ENCODE measurements at regions of chr1 and their contacts with region 1.

Region 1: DNA sequence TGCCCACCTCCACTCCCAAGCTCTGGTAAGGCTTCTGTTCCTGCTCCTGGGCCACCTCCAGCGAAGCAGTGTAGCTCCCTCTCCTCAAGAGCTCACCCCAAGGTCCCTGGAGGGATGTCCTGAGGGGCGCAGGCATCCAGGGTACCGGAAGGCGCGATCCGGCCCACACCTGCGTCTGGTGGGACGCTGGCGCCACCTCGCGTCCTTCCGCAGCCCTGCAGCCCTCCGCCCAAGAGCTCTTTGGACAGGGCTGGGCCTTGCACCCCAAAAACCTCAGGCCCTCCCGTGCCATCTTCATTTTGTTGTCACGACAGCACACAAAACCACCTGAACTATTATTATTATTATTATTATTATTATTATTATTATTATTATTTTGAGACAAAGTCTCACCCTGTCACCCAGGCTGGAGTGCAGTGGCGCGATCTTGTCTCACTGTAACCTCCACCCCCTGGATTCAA is 49.2 kb upstream of the PAX7 start:
- DNase-seq: no peak
- ATAC-seq: peak; percentile 94
- H3K4me3 ChIP-seq: no peak overlapping the region
- H3K27ac ChIP-seq: no peak overlapping the region
- H3K4me1 ChIP-seq: peaks cover 0 to 6% of the 10 kb centered on the region in 2 experiments; a peak in 3 of 4 replicates
- H3K27me3 ChIP-seq: no peaks in the 10 kb centered on the region
- CTCF ChIP-seq: peak; percentile 52 to 93 (median 82); a peak in 5 of 6 replicates
- POLR2A ChIP-seq: no peak
- RAD21 ChIP-seq: peak; percentile 85

Region 2: DNA sequence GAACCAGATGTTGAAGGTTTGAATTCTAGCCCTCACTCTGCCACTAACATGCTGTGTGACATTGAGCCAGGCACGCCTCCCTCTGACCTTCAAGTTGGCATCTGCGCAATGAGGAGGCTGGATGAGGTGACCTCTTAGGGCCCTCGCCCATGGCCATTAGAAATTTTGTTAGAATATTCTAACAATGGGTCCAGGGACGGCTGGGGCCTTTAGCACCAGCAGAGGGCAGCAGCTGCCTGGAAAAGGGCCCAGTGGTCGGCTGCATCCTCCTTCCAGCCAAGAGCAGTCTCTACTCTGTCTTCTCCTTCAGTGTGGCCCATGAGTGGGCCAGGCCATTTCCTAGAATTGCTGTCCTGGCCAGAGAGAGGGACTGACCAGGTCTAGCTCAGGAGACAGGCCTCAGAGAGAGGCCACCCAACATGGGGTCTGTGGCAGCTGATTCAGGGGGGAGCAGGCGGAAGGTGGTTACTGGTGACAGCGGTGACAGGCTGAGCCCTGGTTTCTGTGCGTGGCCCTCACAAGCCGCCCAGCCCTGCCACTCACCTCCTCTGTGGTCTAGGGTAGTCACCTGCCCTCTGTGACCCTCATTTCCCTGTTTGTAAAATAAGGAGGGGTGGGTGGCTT is 927.6 kb before region 1 on chr1:
- CTCF ChIA-PET with region 1: interaction called, 6 read pairs
- POLR2A ChIA-PET with region 1: no interaction called
- RAD21 ChIA-PET with region 1: no interaction called
- intact Hi-C with region 1: loop called (anchors 2 kb)
- DNase-seq: no peak
- ATAC-seq: peak; percentile 94
- H3K4me3 ChIP-seq: no peak overlapping the region
- H3K27ac ChIP-seq: no peak overlapping the region
- H3K4me1 ChIP-seq: no peaks in the 10 kb centered on the region
- H3K27me3 ChIP-seq: no peaks in the 10 kb centered on the region
- CTCF ChIP-seq: peak; percentile 53 to 81 (median 76); a peak in 5 of 6 replicates
- POLR2A ChIP-seq: no peak
- RAD21 ChIP-seq: peak; percentile 67

Region 3: GRCh38 chr1:18299441-18300338 is 281.8 kb before region 1 on chr1:
- CTCF ChIA-PET with region 1: interaction called, 10 read pairs
- POLR2A ChIA-PET with region 1: no interaction called
- RAD21 ChIA-PET with region 1: no interaction called
- intact Hi-C with region 1: no loop called
- DNase-seq: peak; percentile 10
- ATAC-seq: peak; percentile 77
- H3K4me3 ChIP-seq: no peak overlapping the region
- H3K27ac ChIP-seq: no peak overlapping the region
- H3K4me1 ChIP-seq: no peaks in the 10 kb centered on the region
- H3K27me3 ChIP-seq: peaks cover 49% of the 10 kb centered on the region
- CTCF ChIP-seq: peak; percentile 60 to 91 (median 83)
- POLR2A ChIP-seq: no peak
- RAD21 ChIP-seq: peak; percentile 49

Region 4: GRCh38 chr1:18564676-18565075 is 16.8 kb before region 1 on chr1:
- CTCF ChIA-PET with region 1: interaction called, 30 read pairs
- POLR2A ChIA-PET with region 1: no interaction called
- RAD21 ChIA-PET with region 1: no interaction called
- intact Hi-C with region 1: no loop called
- DNase-seq: no peak
- ATAC-seq: no peak
- H3K4me3 ChIP-seq: no peak overlapping the region
- H3K27ac ChIP-seq: no peak overlapping the region
- H3K4me1 ChIP-seq: no peaks in the 10 kb centered on the region
- H3K27me3 ChIP-seq: 0 out of 2 replicates have a peak, but pooled peaks cover 3% of the 10 kb centered on the region
- CTCF ChIP-seq: no peak
- POLR2A ChIP-seq: no peak
- RAD21 ChIP-seq: no peak

Region 5: DNA sequence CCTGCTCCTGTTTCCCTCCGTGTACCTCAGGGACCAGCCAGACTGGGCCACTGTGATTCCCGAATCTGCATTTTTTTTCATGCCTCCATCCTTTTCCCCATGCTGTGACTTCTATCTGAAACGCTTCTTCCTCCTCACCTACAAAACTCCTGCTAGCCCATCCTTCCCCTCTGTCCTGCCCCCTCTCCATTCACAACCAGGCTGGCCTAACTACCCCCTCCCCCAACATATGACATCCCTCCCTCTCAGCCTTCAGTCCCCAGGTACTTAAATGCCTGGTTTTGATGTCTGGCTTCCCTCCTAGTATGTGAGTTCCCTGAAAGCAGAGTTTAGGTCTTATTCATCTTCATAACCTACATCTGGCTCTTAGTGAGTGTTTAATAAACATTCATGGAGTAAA is 195.3 kb after region 1 on chr1:
- CTCF ChIA-PET with region 1: no interaction called
- POLR2A ChIA-PET with region 1: no interaction called
- RAD21 ChIA-PET with region 1: no interaction called
- intact Hi-C with region 1: no loop called
- DNase-seq: no peak
- ATAC-seq: no peak
- H3K4me3 ChIP-seq: no peak overlapping the region
- H3K27ac ChIP-seq: no peak overlapping the region
- H3K4me1 ChIP-seq: no peaks in the 10 kb centered on the region
- H3K27me3 ChIP-seq: peaks cover 37% of the 10 kb centered on the region
- CTCF ChIP-seq: no peak
- POLR2A ChIP-seq: no peak
- RAD21 ChIP-seq: no peak

Region 6: GRCh38 chr1:18875107-18875795 is 293.8 kb after region 1 on chr1:
- CTCF ChIA-PET with region 1: interaction called, 10 read pairs
- POLR2A ChIA-PET with region 1: no interaction called
- RAD21 ChIA-PET with region 1: no interaction called
- intact Hi-C with region 1: no loop called
- DNase-seq: peak; percentile 81
- ATAC-seq: peak; percentile 97
- H3K4me3 ChIP-seq: no peak overlapping the region
- H3K27ac ChIP-seq: no peak overlapping the region
- H3K4me1 ChIP-seq: peaks cover 0 to 6% of the 10 kb centered on the region in 2 experiments; a peak in 1 of 4 replicates
- H3K27me3 ChIP-seq: no peaks in the 10 kb centered on the region
- CTCF ChIP-seq: peak; percentile 91 to 94 (median 92)
- POLR2A ChIP-seq: no peak
- RAD21 ChIP-seq: peak; percentile 89